ENCODE measurements at regions of chr9 and their contacts with region 1.

Region 1: GRCh38 chr9:82957529-82958379 is 105.2 kb downstream of the RASEF start:
- DNase-seq: no peak
- H3K4me3 ChIP-seq: no peak overlapping the region
- H3K27ac ChIP-seq: no peak overlapping the region
- H3K4me1 ChIP-seq: no peaks in the 10 kb centered on the region
- H3K27me3 ChIP-seq: no peaks in the 10 kb centered on the region
- CTCF ChIP-seq: no peak
- POLR2A ChIP-seq: no peak

Region 2: DNA sequence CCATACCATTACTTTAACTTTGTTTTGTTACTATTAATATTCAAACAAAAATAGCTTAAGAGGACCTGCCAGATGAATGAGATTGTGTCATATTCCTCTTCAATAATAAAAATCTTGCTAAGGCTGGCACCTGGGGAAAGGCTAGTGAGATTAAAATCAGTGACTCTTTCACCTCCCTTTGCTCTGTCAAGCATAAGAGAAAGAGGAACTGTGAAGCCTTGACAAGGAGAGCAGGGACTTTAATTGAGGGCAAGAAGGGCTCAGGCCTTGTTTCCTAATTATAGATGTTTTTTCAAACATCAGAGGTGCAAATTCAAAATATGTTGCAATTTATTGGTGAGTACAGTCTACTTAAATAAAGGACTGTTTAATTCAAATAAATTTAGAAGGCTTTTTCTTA is 877.5 kb before region 1 on chr9:
- intact Hi-C with region 1: loop called (anchors 10 kb)
- DNase-seq: no peak
- H3K4me3 ChIP-seq: no peak overlapping the region
- H3K27ac ChIP-seq: no peak overlapping the region
- H3K4me1 ChIP-seq: no peaks in the 10 kb centered on the region
- H3K27me3 ChIP-seq: no peaks in the 10 kb centered on the region
- CTCF ChIP-seq: no peak
- POLR2A ChIP-seq: no peak

Region 3: GRCh38 chr9:82903503-82903902 is 54.3 kb before region 1 on chr9:
- intact Hi-C with region 1: no loop called
- DNase-seq: no peak
- H3K4me3 ChIP-seq: no peak overlapping the region
- H3K27ac ChIP-seq: no peak overlapping the region
- H3K4me1 ChIP-seq: no peaks in the 10 kb centered on the region
- H3K27me3 ChIP-seq: no peaks in the 10 kb centered on the region
- CTCF ChIP-seq: no peak
- POLR2A ChIP-seq: no peak

Region 4: DNA sequence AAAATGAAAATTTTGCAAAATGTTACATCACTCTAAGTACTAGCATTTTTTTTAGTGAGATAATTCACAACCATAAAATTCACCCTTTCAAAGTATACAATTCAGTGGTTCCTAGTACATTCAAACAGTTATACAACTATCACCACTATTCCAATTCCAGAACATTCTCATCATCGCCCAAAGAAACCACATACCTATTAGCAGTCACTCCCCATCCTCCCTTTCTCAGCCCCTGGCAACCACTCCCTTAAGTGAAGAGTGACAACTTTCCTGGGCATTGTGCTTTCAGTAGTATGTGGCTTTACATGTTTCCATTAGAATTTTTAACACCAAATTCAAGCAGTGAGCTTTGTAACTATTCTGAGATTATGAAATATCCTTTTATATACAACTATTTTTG is 23.8 kb after region 1 on chr9:
- intact Hi-C with region 1: no loop called
- DNase-seq: no peak
- H3K4me3 ChIP-seq: no peak overlapping the region
- H3K27ac ChIP-seq: no peak overlapping the region
- H3K4me1 ChIP-seq: no peaks in the 10 kb centered on the region
- H3K27me3 ChIP-seq: no peaks in the 10 kb centered on the region
- CTCF ChIP-seq: no peak
- POLR2A ChIP-seq: no peak